ENCODE measurements at regions of chr20 and their contacts with region 1.

Region 1: GRCh38 chr20:59087829-59088433 is 45.3 kb upstream of the PRELID3B start:
- DNase-seq: peak; percentile 88
- ATAC-seq: peak; percentile 92
- H3K4me3 Mint-ChIP-seq: no peak overlapping the region
- H3K27ac Mint-ChIP-seq: no peak overlapping the region
- H3K4me1 Mint-ChIP-seq: peaks cover 4% of the 10 kb centered on the region; the same call in 1 of the 2 replicates
- H3K27me3 Mint-ChIP-seq: peaks cover 4% of the 10 kb centered on the region; the same call in 1 of the 2 replicates
- CTCF ChIP-seq: peak; percentile 88

Region 2: GRCh38 chr20:59102841-59103299 is 14.9 kb after region 1 on chr20:
- CTCF ChIA-PET with region 1: interaction called, 12 read pairs
- POLR2A ChIA-PET with region 1: no interaction called
- DNase-seq: no peak
- ATAC-seq: no peak
- H3K4me3 Mint-ChIP-seq: no peak overlapping the region
- H3K27ac Mint-ChIP-seq: no peak overlapping the region
- H3K4me1 Mint-ChIP-seq: peaks cover 17% of the 10 kb centered on the region
- H3K27me3 Mint-ChIP-seq: peaks cover 4% of the 10 kb centered on the region; the same call in 1 of the 2 replicates
- CTCF ChIP-seq: no peak

Region 3: DNA sequence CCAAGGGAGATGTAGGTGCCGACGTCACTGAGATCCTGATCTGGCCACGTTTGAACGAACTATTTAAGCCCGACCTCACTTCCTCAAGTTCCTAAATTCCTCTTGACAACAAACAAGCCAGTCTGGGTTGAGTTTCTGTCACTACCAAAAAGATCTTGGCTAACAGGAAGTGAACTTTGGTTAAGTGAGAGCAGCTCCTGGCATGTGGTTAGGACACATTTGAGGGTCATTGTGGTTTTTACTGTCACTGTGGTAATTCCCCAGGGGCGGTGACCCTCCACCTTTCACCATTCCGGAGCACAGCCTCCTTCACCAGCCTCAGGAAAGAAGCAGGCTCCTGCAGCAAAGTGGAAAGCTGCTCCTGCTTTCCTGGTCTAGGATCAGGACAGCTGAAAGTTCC is 32.6 kb after region 1 on chr20:
- CTCF ChIA-PET with region 1: interaction called, 11 read pairs
- POLR2A ChIA-PET with region 1: interaction called, 3 read pairs
- DNase-seq: no peak
- ATAC-seq: no peak
- H3K4me3 Mint-ChIP-seq: no peak overlapping the region
- H3K27ac Mint-ChIP-seq: no peak overlapping the region
- H3K4me1 Mint-ChIP-seq: peaks cover 42% of the 10 kb centered on the region
- H3K27me3 Mint-ChIP-seq: peaks cover 5% of the 10 kb centered on the region
- CTCF ChIP-seq: no peak

Region 4: GRCh38 chr20:59403261-59403961 is 315.5 kb after region 1 on chr20:
- CTCF ChIA-PET with region 1: interaction called, 17 read pairs
- POLR2A ChIA-PET with region 1: no interaction called
- DNase-seq: peak; percentile 86
- ATAC-seq: peak; percentile 76
- H3K4me3 Mint-ChIP-seq: peak overlapping the region; percentile 58; the same call in 1 of the 2 replicates
- H3K27ac Mint-ChIP-seq: no peak overlapping the region
- H3K4me1 Mint-ChIP-seq: peaks cover 16% of the 10 kb centered on the region
- H3K27me3 Mint-ChIP-seq: peaks cover 12% of the 10 kb centered on the region
- CTCF ChIP-seq: peak; percentile 100

Measured in WTC11 (cell line).